ENCODE measurements at regions of chr22 and their contacts with region 1.

Region 1: DNA sequence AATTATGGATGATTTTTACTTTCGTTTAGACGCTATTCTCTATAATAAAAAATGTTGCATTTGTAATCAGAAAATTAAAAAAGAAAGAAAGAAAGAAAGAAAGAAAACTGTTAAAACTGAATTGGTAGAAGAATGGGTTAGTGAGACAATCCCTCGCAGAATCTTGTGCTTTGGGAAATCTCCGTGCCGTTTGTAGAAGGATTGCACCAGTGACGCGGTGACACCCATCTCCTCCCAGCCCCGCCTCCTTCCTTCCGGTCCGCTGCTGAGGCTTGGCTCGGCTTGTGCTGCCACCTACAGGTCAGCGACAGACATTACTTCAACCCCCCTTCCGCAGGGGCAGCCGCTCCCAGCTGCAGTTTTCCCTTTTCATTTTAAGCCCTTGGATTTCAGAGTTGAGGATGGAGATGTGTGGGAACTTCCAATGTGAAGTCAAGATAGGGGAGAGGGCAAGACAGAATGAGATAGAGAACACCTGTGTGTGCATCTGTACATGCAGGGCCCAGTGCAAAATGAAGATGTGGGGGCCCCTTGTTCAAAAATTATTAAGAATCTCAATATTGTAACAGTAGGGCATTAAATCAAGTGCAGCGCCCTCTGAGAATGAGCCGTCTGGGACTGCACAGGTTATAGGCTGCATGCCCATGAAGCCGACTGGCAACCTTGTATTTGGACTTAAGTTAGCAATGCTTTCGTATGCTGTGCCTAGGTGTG is 41.1 kb downstream of the TST start:
- H3K4me3 ChIP-seq: peak overlapping the region; percentile 20; the same call in 1 of the 2 replicates
- H3K27ac ChIP-seq: no peak overlapping the region
- H3K4me1 ChIP-seq: no peaks in the 10 kb centered on the region
- CTCF ChIP-seq: peak; percentile 91

Region 2: DNA sequence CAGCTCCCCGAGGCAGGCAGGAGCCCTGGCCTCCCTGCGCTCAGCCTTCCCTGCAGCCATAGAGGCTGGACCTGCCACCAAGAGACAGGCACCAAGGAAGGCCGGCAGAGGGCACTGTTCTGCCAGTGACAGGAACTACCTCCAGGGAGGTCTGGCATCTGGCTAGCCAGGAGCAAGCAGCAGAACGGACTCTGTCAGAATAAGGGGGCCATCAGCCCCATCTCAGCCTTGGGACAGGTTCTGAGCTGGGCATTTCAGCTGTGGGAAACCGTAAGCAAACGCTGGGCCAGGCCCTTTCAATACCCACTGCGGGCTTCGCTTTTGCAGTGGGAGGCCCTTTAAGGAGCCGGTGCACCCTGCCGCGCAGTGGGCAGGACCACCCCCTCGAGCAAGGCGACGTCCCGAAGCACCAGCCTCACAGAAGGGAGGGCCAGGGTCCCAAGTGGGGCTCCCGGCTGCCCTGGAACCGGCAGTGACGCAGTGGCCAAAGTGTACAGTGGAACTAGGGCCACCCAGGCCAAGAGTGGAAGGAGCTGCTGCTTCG is 220.4 kb before region 1 on chr22:
- CTCF ChIA-PET with region 1: interaction called, 18 read pairs
- POLR2A ChIA-PET with region 1: no interaction called
- H3K4me3 ChIP-seq: no peak overlapping the region
- H3K27ac ChIP-seq: no peak overlapping the region
- H3K4me1 ChIP-seq: no peaks in the 10 kb centered on the region
- CTCF ChIP-seq: peak; percentile 78

Region 3: DNA sequence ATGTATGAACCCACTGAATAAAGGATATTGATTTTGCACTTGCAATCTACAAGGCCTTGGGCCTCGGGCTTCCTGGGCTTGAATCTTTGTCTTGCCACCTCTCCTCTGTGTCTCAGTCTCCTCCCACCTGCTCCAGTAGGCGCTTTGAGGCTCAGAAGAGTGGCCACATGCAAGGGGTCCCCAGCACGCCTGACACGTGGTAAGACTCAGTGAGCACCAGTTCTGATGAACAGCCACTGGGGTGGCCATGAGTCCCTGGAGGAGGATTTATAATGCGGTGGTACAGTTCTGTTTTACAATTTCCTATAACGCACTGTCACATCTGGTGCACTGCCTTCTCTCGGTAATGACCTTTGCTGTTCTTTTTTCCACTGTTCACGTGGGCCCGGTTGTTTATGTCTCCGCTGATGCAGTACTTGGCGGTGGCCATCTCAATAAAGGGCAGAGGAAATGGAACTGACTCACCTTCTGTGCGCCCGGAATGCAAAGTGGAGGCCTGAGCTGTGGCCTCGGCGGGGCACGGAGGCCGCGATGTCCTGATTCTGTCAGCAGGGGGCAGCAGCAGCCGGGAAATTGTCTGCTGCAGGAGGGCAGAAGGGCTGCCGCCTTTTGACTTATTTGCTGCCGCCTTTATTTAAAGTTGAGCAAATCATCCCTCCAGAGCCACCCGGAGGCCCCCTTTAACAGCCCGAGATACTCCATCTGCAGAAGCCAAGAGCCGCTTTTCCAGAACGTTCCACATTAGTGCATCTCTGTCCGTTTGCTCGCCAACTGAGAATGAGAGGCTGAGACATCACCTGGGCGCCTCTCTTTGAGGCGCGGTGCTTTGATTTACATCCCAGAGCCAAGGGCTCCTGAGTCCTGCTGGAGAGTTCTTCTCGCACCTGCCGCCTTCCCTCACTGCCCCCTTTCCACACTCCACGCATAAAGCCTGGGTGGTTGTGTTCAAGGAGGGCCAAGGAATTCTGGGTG is 196.2 kb before region 1 on chr22:
- CTCF ChIA-PET with region 1: interaction called, 12 read pairs
- POLR2A ChIA-PET with region 1: no interaction called
- H3K4me3 ChIP-seq: no peak overlapping the region
- H3K27ac ChIP-seq: no peak overlapping the region
- H3K4me1 ChIP-seq: peaks cover 2% of the 10 kb centered on the region; the same call in 1 of the 2 replicates
- CTCF ChIP-seq: peak; percentile 81

Region 4: DNA sequence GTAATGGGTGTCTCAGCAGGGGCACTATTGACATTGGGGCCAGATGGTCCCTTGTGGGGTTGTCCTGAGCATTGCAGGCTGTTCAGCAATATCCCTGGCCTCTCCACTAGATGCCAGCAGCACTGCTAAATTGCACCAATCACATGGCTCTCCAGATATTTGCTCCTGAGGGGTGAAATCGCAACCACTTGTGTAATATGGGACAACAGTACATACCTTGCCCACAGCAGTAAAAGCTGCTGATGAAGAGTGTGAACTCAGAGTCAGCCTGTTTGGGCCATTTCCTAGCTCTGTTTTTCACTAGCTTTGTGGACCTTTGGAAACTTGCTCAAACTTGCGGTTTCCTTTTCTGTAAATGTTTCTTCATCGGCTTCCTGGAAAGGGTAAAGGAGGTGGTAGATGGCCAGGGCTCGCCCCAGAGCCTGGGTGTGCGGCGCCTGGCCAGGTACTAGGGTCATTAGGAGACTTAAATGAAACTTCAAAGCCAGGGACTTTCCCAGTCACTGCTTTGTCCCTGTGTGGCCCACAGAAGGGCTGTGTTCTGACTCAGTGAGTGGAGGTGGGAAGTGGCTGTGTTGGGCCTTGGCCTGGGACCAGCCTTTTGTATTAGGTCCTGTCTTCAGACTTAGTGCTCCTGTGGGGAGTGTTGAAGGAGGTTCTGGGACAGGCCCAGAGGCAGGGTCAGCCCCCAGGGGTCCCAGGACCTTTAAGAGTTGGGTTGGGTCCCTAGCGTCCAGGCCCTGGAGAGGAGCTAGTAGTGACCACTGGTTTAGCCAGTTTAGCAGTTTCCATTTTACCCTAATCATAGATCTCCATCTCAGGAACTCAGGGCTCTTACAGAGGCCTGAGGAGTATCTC is 104.2 kb before region 1 on chr22:
- CTCF ChIA-PET with region 1: interaction called, 12 read pairs
- POLR2A ChIA-PET with region 1: no interaction called
- H3K4me3 ChIP-seq: no peak overlapping the region
- H3K27ac ChIP-seq: no peak overlapping the region
- H3K4me1 ChIP-seq: no peaks in the 10 kb centered on the region
- CTCF ChIP-seq: peak; percentile 22; the same call in 1 of the 2 replicates

Region 5: GRCh38 chr22:36954211-36954891 is 23.8 kb before region 1 on chr22:
- CTCF ChIA-PET with region 1: interaction called, 12 read pairs
- POLR2A ChIA-PET with region 1: no interaction called
- H3K4me3 ChIP-seq: no peak overlapping the region
- H3K27ac ChIP-seq: no peak overlapping the region
- H3K4me1 ChIP-seq: no peaks in the 10 kb centered on the region
- CTCF ChIP-seq: no peak

Region 6: DNA sequence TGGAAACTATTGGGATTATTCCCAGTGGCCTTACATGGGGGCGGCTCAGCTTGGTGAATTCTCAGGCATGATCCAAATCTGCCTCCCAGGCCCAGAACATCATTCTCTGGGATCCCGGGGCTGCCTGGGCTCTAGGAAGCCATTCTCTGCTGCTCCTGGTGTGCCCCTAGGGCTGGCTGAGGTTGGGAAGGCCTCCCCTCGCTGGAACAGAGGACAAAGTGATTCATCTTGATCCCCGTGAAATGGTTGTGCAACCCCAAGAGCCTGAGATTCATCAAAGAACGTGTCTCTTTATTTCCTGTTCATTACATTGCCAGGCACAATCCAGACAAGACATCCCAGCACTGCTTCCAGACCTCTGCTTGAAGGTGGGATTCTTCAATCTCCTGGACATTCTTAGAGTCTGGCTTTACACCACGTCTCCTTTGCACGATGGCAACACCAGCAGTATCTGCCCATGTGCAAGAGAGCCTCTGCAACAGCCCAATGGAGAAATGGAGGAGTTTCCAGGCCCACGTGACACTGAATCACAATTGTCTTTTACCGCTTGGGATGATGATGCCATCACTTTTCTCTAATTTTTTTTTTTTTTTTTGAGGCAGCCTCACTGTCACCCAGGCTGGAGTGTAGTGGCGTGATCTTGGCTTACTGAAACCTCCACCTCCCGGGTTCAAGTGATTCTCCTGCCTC is 11.1 kb before region 1 on chr22:
- CTCF ChIA-PET with region 1: interaction called, 45 read pairs
- POLR2A ChIA-PET with region 1: interaction called, 10 read pairs
- H3K4me3 ChIP-seq: no peak overlapping the region
- H3K27ac ChIP-seq: no peak overlapping the region
- H3K4me1 ChIP-seq: no peaks in the 10 kb centered on the region
- CTCF ChIP-seq: no peak

Region 7: DNA sequence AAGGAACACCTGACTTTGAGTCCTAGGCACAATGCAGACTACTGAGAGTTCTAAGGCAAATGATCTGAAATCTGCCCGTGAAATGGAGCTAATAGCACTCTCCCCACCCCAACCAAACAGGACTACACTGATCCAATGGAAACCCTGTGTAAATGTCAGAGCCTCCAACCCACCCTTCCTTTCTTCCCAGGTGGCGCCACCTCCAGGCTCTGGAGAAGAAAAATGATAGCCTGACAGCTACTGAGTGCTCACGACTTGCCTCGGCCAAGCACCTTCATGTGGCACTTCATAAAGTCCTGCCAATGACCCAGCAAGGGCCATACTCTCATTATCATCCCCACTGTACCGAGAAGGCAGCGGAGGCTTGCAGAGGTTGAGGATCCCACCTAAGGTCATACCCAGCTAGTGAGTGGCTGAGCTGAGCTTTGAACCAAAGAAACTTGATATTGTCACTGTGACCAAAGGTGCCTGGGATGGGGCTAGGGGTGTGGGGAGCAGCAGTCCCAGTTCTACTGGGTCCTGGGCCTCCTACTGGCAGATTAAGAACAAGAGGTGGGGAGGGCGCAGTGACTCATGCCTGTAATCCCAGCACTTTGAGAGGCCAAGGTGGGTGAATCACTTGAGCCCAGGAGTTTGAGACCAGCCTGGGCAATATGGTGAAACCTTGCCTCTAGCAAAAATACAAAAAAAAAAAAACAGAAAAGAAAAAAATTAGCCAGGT is 20.7 kb after region 1 on chr22:
- CTCF ChIA-PET with region 1: interaction called, 22 read pairs
- POLR2A ChIA-PET with region 1: interaction called, 3 read pairs
- H3K4me3 ChIP-seq: no peak overlapping the region
- H3K27ac ChIP-seq: no peak overlapping the region
- H3K4me1 ChIP-seq: no peaks in the 10 kb centered on the region; the same call in 1 of the 2 replicates
- CTCF ChIP-seq: no peak

Region 8: GRCh38 chr22:37100589-37101127 is 122.6 kb after region 1 on chr22:
- CTCF ChIA-PET with region 1: no interaction called
- POLR2A ChIA-PET with region 1: no interaction called
- H3K4me3 ChIP-seq: no peak overlapping the region
- H3K27ac ChIP-seq: no peak overlapping the region
- H3K4me1 ChIP-seq: no peaks in the 10 kb centered on the region; the same call in 1 of the 2 replicates
- CTCF ChIP-seq: no peak

Measured in HEK293 (cell line).